ENCODE measurements at regions of chr6 and their contacts with region 1.

Region 1: DNA sequence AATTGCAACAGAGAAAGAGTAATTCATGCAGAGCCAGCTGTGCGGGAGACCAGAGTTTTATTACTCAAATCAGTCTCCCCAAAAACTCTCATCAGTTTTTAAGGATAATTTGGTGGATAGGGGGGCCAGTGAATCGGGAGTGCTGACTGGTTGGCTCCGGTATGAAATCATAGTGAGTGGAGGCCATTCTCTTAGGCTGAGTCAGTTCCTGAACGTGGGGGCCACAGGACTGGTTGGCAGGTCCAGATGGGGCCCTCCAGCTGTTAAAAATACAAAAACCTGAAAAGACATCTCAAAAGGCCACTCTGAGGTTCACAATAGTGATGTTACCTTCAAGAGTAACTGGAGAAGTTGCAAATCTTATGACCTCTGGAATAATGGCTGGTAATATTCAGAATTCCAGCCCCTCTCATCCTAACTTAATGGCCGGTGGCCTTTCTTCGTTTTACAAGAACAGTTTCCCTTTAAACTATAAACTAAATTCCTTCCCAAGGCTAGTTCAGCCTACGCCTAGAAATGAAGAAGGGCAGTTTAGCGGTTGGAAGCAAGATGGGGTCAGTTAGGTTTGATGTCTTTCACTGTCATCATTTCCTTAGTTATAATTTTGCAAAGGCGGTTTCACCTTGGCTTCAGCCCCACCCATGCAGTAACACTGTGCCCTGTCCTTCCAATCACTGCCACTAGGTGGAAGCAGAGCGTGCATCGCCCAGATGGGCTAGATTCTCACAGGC is 6.8 kb upstream of the MICA start:
- DNase-seq: peak; percentile 92
- ATAC-seq: peak; percentile 64
- H3K4me3 Mint-ChIP-seq: no peak overlapping the region
- H3K27ac Mint-ChIP-seq: no peak overlapping the region
- H3K4me1 Mint-ChIP-seq: peaks cover 20% of the 10 kb centered on the region
- H3K27me3 Mint-ChIP-seq: no peaks in the 10 kb centered on the region

Region 2: GRCh38 chr6:31441365-31442267 is 45.0 kb after region 1 on chr6:
- CTCF ChIA-PET with region 1: interaction called, 68 read pairs
- POLR2A ChIA-PET with region 1: no interaction called
- intact Hi-C with region 1: loop called (anchors 1 kb)
- DNase-seq: peak; percentile 90
- ATAC-seq: peak; percentile 93
- H3K4me3 Mint-ChIP-seq: no peak overlapping the region
- H3K27ac Mint-ChIP-seq: no peak overlapping the region
- H3K4me1 Mint-ChIP-seq: peaks cover 5% of the 10 kb centered on the region
- H3K27me3 Mint-ChIP-seq: peaks cover 30% of the 10 kb centered on the region

Region 3: GRCh38 chr6:31485055-31485454 is 88.5 kb after region 1 on chr6:
- CTCF ChIA-PET with region 1: interaction called, 3 read pairs
- POLR2A ChIA-PET with region 1: interaction called, 4 read pairs
- intact Hi-C with region 1: loop called (anchors 1 to 5 kb)
- DNase-seq: no peak
- ATAC-seq: no peak
- H3K4me3 Mint-ChIP-seq: no peak overlapping the region
- H3K27ac Mint-ChIP-seq: no peak overlapping the region
- H3K4me1 Mint-ChIP-seq: peaks cover 1% of the 10 kb centered on the region
- H3K27me3 Mint-ChIP-seq: no peaks in the 10 kb centered on the region

Measured in activated CD4-positive, alpha-beta T cell treated with anti-CD3 and anti-CD28 coated beads for 36 hours (primary cell).